ENCODE measurements at regions of chr21 and their contacts with region 1.

Region 1: GRCh38 chr21:44338971-44339910 is at the start of gene CFAP410:
- DNase-seq: peak; percentile 88 to 99 (median 92)

Region 2: GRCh38 chr21:44006017-44006619 is 333.1 kb before region 1 on chr21:
- intact Hi-C with region 1: loop called (anchors 5 kb)
- DNase-seq: peak in 2 of 10 donors; percentile 31 to 54

Region 3: DNA sequence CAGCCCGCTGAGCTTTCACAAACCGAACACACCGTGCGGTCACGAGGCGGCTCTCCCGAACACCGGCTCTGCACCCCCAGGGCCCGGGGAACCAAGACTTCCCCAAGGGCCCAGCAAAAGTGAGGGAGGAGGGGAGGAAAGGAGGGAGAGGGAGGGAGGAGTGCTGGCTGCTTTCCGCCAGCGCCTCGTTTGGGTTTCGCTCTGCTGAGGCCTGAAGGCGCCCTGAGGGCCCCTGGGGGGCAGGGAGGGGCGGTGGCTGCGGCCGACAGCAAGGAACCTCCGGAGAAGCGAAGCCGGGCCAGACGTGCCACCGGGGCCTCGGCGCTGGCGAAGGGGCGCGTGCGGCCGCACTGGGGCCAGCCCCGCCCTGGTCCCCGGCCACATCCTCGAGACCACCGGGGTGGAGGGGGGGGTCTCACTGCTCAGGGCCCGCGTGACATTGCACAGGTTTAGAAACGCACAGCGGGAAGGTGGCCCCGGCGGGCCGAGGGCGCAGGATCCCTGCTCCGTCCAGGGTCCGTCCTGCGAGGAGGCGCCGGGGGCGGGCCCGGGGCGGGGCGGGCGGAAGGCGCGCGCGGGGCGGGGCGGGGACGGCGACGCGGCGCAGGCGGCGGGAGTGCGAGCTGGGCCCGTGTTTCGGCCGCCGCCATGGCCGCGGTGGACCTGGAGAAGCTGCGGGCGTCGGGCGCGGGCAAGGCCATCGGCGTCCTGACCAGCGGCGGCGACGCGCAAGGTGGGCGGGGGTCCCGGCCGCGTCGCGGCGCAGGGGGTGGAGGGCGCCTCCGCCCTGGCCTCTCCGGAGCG is 39.6 kb before region 1 on chr21 and contains the start of gene PFKL:
- intact Hi-C with region 1: loop called (anchors 5 kb)
- DNase-seq: peak in 9 of 10 donors; percentile 43 to 94 (median 61)

Region 4: DNA sequence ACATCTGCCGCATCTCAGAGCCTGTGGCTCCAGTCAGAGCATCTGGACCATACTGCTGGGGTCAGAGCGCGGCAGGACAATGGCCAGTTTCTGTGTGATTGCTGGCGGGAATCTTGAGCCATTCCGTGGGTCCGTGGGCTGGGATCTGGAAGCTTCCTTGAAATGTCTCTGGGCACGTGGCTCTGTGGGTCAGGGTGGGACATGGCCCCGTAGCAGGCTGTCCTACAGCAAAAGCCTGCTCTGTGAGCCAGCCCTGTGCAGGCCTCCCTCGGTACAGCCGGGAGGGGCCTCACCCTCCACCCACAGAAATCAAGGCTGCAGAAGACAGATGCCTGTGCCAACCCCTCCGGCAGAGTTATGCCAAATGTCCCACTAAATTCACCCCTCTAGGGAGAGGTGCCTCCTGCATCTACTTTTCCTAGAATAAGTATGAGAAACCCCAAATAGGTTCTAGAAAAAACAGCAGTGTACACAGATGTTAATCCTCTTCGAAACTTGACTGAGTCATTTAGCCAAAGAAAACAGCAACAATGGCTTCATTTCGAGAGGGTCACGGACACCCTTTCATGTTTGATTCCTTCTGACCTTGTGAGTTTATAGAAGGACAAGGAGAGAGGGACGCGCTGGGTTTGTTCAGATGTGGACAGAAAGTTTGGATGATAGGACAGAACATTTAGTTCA is 1093.5 kb after region 1 on chr21:
- intact Hi-C with region 1: no loop called
- DNase-seq: peak in 1 of 10 donors; percentile 74

Measured in posterior cingulate gyrus (tissue), 11 donors.